Activated T-helper 1 cell treated with anti-CD3 and anti-CD28 coated beads, Interleukin-12 subunit alpha, Interleukin-12 subunit beta, Interleukin-2, Interleukin-4 antibody, amounts not matched to agents 30 ng/mL and 10 ng/mL and 1 ng/mL, durations not matched to agents 14 hours and 24 hours and 36 hours (primary cell): ENCODE measurements at regions of chr19 and their contacts with region 1.

Region 1: DNA sequence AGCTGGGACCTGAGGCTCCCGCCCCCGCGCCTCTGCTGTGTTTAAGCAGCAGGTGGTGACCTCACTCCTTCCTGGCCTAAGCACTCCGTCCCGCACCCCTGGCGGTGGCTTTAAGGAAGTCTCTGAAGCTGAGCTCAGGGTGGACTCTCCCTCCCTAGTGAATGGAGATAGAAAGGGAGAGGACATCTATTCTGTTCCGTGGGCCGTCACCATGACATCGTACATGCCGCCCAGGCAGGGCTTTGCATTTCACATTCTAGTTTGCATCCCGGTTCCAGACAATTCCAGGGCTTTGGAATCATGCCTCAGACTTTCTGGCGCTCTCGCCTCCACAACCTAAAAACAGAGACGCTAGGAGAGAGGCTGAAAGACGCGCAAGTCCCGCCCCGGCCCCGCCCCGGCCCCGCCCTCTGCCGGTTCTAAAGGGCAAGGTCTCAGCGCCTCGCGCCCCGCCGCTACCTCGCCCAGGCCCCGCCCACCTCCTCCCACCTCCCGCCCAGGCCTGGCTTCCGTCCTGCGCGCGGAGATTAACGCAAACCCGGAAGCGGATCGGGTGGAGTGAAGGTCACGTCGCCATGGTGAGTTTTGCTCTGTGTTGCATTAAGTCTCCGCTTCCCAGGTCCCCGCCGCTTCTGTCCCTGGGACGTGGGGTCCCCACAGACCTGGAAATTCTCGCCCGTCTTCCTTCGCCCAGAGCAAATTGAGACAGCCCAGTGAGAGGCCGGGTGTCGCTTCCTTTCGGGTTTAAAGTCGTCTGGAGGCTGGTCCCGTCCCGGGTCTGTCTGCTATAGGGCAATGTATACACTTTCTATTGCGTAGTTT is at the start of gene ZNF808:
- DNase-seq: peak; percentile 87
- H3K4me3 Mint-ChIP-seq: peak within 1 kb of the TSS; percentile 99
- H3K27ac Mint-ChIP-seq: peak within 1 kb of the TSS; percentile 98
- H3K4me1 Mint-ChIP-seq: peaks cover 12% of the 10 kb centered on the region
- H3K27me3 Mint-ChIP-seq: no peaks in the 10 kb centered on the region
- total RNA-seq, gene ZNF808: 19.1 and 20.0 TPM in 2 replicates

Region 2: GRCh38 chr19:52048555-52049501 is 478.5 kb before region 1 on chr19 and contains the start of gene ZNF432:
- intact Hi-C with region 1: loop called (anchors 1 kb)
- DNase-seq: peak; percentile 76
- H3K4me3 Mint-ChIP-seq: peak within 1 kb of the TSS; percentile 95
- H3K27ac Mint-ChIP-seq: peak within 1 kb of the TSS; percentile 99
- H3K4me1 Mint-ChIP-seq: peaks cover 20% of the 10 kb centered on the region
- H3K27me3 Mint-ChIP-seq: no peaks in the 10 kb centered on the region
- total RNA-seq, gene ZNF432: 12.5 and 15.0 TPM in 2 replicates

Region 3: DNA sequence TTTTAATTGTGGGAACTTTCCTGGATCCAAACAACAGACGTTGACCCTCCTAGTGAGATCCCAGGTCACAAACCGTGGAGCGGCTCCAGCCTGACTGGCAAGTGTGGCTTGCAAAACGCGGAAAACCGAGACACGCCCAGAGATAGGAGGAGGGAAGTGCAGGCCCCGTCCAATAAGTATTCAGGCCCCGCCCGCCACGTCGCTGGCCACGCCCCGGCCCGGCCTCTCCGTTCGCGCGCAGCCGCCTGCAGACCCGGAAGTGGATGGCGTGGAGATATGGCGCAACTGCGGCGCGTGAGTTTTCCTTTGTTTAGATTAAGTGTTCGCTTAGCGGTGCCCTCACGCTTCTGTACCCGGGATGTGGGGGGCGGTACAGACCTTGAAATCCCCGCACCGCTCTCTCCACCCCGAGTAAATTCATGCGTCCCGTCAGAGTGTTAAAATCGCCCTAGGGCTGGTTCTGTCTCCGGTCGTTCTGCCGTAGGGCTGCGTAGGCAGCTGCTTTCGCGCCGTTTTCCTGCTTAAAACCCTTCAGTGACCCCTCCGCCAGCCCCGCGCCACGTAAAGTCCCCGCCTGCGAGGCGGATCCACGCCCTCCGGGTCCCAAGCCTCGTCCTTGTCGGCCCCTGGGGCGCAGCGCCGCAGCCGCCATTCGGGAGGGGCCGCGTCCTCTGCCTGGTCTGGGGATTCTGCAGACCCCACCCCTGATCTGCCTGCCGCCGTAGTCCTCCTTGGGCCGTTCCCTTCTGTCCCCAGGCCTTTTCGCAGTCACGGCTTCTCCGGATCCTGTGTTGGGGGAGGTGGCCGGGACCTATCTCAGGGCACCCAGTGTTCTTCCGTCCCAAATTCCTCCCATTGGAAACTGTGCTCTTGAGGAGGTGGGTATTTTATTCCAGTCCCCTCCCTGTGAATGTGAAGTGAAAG is 257.7 kb before region 1 on chr19 and contains the start of gene ZNF766:
- intact Hi-C with region 1: loop called (anchors 1 kb)
- DNase-seq: peak; percentile 96
- H3K4me3 Mint-ChIP-seq: peak within 1 kb of the TSS; percentile 98
- H3K27ac Mint-ChIP-seq: peak within 1 kb of the TSS; percentile 95
- H3K4me1 Mint-ChIP-seq: peaks cover 24% of the 10 kb centered on the region
- H3K27me3 Mint-ChIP-seq: no peaks in the 10 kb centered on the region
- total RNA-seq, gene ZNF766: 13.8 and 16.5 TPM in 2 replicates

Region 4: GRCh38 chr19:52492597-52493470 is 34.5 kb before region 1 on chr19:
- intact Hi-C with region 1: no loop called
- DNase-seq: no peak
- H3K4me3 Mint-ChIP-seq: no peak overlapping the region
- H3K27ac Mint-ChIP-seq: no peak overlapping the region
- H3K4me1 Mint-ChIP-seq: no peaks in the 10 kb centered on the region
- H3K27me3 Mint-ChIP-seq: no peaks in the 10 kb centered on the region

Region 5: DNA sequence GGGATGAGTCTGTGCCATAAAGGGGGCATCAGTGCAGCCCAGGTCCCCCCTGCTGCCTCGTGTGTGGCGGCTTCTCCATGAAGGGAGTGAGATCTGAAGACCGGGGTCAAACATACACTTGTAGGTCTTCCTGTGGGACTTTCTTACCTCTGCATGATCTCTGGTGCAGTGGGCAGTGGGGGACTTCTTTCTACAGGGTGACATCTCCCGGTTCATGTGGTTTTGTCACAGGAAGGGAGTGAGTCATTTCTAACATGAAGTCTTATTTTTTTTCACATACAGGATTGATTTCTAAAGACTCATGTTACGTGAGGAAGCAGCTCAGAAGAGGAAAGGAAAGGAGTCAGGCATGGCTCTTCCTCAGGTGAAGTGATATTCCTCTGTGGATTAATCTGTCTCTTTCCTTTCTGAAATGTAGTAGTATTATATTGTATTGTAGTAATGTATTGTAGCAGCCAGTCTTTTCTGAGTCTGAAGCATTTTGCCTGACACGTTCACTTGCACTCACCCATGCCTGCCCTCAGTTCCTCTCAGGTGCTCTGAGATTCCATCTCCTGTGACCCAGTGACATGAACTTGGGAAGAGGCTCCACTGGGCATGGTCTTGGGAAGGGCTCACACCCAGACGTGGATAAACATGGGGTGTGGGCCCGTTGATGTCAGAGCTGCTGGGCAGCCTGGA is 15.8 kb after region 1 on chr19:
- intact Hi-C with region 1: loop called (anchors 1 kb)
- DNase-seq: peak; percentile 38
- H3K4me3 Mint-ChIP-seq: peak overlapping the region; percentile 40
- H3K27ac Mint-ChIP-seq: peak overlapping the region; percentile 51
- H3K4me1 Mint-ChIP-seq: peaks cover 15% of the 10 kb centered on the region
- H3K27me3 Mint-ChIP-seq: no peaks in the 10 kb centered on the region

Region 6: DNA sequence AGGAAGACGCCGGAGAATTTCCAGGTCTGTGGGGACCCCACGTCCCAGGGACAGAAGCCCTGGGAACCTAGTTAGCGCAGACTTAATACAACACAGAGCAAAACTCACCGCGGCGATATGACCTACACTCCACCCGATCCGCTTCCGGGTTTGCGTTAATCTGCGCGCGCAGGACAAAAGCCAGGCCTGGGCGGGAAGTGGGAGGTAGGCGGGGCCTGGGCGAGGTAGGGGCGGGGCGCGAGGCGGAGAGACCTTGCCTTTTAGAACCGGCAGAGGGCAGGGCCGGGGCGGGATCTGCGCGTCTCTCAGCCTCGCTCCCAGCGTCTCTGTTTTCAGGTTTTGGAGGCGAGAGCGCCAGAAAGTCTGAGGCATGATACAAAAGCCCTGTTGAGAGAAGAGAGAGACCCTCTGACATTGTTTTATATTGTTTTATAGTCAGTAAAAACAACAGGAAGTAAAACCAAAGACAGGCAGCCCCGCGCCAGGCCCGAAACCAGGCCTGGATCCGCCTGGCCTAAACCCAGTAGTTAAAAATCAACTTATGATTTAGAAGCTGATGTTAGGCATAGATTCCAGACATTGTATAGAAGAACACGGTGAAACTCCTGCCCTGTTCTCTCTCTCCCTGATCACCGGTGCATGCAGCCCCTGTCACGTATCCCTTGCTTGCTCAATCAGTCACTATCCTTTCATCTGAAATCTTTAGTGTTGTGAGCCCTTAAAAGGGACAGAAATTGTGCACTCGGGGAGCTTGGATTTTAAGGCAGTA is 207.7 kb after region 1 on chr19 and contains the start of gene ZNF611:
- intact Hi-C with region 1: loop called (anchors 1 kb)
- DNase-seq: peak; percentile 97
- H3K4me3 Mint-ChIP-seq: peak within 1 kb of the TSS; percentile 91
- H3K27ac Mint-ChIP-seq: peak within 1 kb of the TSS; percentile 92
- H3K4me1 Mint-ChIP-seq: peaks cover 27% of the 10 kb centered on the region
- H3K27me3 Mint-ChIP-seq: no peaks in the 10 kb centered on the region
- total RNA-seq, gene ZNF611: 17.0 and 21.0 TPM in 2 replicates

Region 7: GRCh38 chr19:52922841-52923777 is 395.8 kb after region 1 on chr19 and contains the start of gene ZNF888:
- intact Hi-C with region 1: loop called (anchors 2 kb)
- DNase-seq: peak; percentile 77
- H3K4me3 Mint-ChIP-seq: peak within 1 kb of the TSS; percentile 93
- H3K27ac Mint-ChIP-seq: peak within 1 kb of the TSS; percentile 96
- H3K4me1 Mint-ChIP-seq: peaks cover 31% of the 10 kb centered on the region
- H3K27me3 Mint-ChIP-seq: no peaks in the 10 kb centered on the region
- total RNA-seq, gene ZNF888: 4.2 and 4.6 TPM in 2 replicates

Region 8: GRCh38 chr19:53333463-53334449 is 806.4 kb after region 1 on chr19 and contains the start of gene ZNF845:
- intact Hi-C with region 1: loop called (anchors 2 kb)
- DNase-seq: peak; percentile 95
- H3K4me3 Mint-ChIP-seq: peak within 1 kb of the TSS; percentile 91
- H3K27ac Mint-ChIP-seq: peak within 1 kb of the TSS; percentile 80
- H3K4me1 Mint-ChIP-seq: peaks cover 10% of the 10 kb centered on the region
- H3K27me3 Mint-ChIP-seq: no peaks in the 10 kb centered on the region
- total RNA-seq, gene ZNF845: 6.5 and 6.7 TPM in 2 replicates